Adrenal gland (tissue), 19 donors: ENCODE measurements at regions of chr4 and their contacts with region 1.

Region 1: GRCh38 chr4:155953151-155954114 is at the start of gene CTSO:
- DNase-seq: peak; percentile 71 to 85 (median 78)
- H3K4me3 ChIP-seq: peak within 1 kb of the TSS; percentile 62 to 86 (median 70)
- H3K27ac ChIP-seq: peak within 1 kb of the TSS; percentile 77 to 100 (median 99)
- H3K4me1 ChIP-seq: peaks cover 0 to 5% of the 10 kb centered on the region in 2 donors
- H3K27me3 ChIP-seq: no peaks in the 10 kb centered on the region
- CTCF ChIP-seq: peak; percentile 39 to 87 (median 58)
- POLR2A ChIP-seq: peak; percentile 48 to 69
- total RNA-seq, gene CTSO: 22.4 to 46.9 (median 33.2) TPM

Region 2: DNA sequence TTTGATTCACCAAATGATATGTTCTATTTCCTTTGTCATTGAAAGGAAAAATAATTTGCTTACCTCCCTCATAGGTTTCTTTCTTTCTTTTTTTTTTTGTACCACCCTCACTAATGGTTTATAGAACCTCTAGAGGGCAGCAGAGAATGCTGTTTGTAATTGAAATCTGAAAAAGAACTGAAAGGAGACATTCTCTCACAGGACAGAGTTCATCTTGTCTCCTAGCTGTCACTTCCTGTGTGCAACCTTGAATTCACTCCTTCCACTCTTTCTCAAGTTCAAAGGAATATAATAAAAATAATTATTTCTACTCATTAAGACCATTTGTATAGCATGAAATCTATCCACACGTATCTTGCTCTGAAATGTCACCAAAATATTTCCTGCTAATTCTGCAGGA is 143.6 kb before region 1 on chr4:
- intact Hi-C with region 1: loop called (anchors 5 kb)
- DNase-seq: peak in 3 of 7 donors; percentile 28 to 32 (median 31)
- H3K4me3 ChIP-seq: no peak overlapping the region
- H3K27ac ChIP-seq: no peak overlapping the region
- H3K4me1 ChIP-seq: no peaks in the 10 kb centered on the region
- H3K27me3 ChIP-seq: no peaks in the 10 kb centered on the region
- CTCF ChIP-seq: peak; percentile 48 to 87 (median 72)
- POLR2A ChIP-seq: no peak

Region 3: DNA sequence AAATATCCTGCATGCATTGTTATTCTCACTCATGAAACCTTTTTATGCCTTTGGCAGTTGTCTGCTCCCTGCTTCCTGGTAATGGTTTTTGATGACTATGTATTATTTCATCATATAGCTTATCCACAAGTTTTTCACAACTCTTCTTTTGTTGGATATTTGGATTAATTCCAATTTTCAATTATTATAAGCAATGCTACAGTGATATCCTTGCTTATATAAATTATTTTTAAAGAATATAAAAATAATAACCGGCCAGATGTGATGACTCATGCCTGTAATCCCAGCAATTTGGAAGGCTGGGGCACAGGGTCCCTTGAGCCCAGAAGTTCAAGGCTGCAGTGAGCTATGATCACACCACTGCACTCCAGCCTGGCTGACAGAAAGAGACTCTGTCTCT is 134.4 kb before region 1 on chr4:
- intact Hi-C with region 1: loop called in 1 of 2 experiments (anchors 5 kb)
- DNase-seq: peak in 5 of 7 donors; percentile 11 to 45 (median 23)
- H3K4me3 ChIP-seq: no peak overlapping the region
- H3K27ac ChIP-seq: no peak overlapping the region
- H3K4me1 ChIP-seq: peaks cover 0 to 6% of the 10 kb centered on the region in 2 donors
- H3K27me3 ChIP-seq: no peaks in the 10 kb centered on the region
- CTCF ChIP-seq: no peak
- POLR2A ChIP-seq: no peak

Region 4: DNA sequence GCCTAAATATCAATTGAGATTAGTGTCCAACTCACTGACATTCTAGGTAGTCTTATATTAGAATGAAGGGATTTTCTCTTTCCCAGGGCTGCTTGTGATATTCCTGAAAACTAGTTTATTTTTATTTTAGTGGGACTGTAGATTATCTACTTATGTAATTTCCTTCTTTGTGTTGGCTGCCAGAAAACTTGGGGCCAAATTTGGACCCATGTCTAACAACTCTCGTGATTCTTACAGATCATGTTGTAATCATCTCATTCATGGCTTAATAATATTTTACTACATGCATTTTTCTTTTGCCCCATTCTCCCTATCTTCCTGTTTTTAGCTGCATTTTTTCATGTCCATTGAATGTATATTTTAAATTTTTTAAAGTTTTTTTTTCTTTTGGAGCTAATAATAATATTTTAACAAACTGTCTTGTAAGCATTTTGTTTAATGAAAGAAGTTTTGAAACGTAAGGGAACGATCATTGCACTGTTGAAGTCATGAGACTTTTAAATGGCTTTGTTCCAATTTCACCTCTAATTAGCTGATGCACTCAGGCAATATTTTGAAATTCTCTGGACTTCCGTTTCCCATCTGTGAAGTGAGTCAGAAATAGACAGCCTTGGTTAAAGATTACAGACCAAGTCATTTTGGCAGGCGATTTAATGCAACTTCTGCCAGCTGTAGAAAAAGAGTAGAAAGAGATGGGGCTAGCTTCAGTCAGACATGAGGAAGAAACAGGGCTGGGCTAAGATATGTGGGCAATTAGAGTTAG is 64.2 kb before region 1 on chr4:
- intact Hi-C with region 1: no loop called
- DNase-seq: peak; percentile 23 to 71 (median 48)
- H3K4me3 ChIP-seq: no peak overlapping the region
- H3K27ac ChIP-seq: no peak overlapping the region
- H3K4me1 ChIP-seq: peaks cover 7% of the 10 kb centered on the region in 2 donors
- H3K27me3 ChIP-seq: no peaks in the 10 kb centered on the region
- CTCF ChIP-seq: no peak
- POLR2A ChIP-seq: no peak